Right cardiac atrium (tissue), 5 donors: ENCODE measurements at regions of chr11 and their contacts with region 1.

Region 1: GRCh38 chr11:59207988-59208451 is 4.7 kb downstream of the MPEG1 start:
- DNase-seq: peak in 2 of 3 donors; percentile 37 to 55
- ATAC-seq: peak; percentile 22 to 63
- H3K4me3 ChIP-seq: no peak overlapping the region
- H3K27ac ChIP-seq: no peak overlapping the region
- H3K4me1 ChIP-seq: no peaks in the 10 kb centered on the region
- H3K27me3 ChIP-seq: no peaks in the 10 kb centered on the region

Region 2: GRCh38 chr11:58912124-58912523 is 295.9 kb before region 1 on chr11:
- intact Hi-C with region 1: no loop called
- DNase-seq: no peak
- ATAC-seq: no peak
- H3K4me3 ChIP-seq: no peak overlapping the region
- H3K27ac ChIP-seq: no peak overlapping the region
- H3K4me1 ChIP-seq: no peaks in the 10 kb centered on the region
- H3K27me3 ChIP-seq: no peaks in the 10 kb centered on the region

Region 3: GRCh38 chr11:58999291-58999680 is 208.7 kb before region 1 on chr11:
- intact Hi-C with region 1: no loop called
- DNase-seq: no peak
- ATAC-seq: no peak
- H3K4me3 ChIP-seq: no peak overlapping the region
- H3K27ac ChIP-seq: no peak overlapping the region
- H3K4me1 ChIP-seq: no peaks in the 10 kb centered on the region
- H3K27me3 ChIP-seq: no peaks in the 10 kb centered on the region

Region 4: DNA sequence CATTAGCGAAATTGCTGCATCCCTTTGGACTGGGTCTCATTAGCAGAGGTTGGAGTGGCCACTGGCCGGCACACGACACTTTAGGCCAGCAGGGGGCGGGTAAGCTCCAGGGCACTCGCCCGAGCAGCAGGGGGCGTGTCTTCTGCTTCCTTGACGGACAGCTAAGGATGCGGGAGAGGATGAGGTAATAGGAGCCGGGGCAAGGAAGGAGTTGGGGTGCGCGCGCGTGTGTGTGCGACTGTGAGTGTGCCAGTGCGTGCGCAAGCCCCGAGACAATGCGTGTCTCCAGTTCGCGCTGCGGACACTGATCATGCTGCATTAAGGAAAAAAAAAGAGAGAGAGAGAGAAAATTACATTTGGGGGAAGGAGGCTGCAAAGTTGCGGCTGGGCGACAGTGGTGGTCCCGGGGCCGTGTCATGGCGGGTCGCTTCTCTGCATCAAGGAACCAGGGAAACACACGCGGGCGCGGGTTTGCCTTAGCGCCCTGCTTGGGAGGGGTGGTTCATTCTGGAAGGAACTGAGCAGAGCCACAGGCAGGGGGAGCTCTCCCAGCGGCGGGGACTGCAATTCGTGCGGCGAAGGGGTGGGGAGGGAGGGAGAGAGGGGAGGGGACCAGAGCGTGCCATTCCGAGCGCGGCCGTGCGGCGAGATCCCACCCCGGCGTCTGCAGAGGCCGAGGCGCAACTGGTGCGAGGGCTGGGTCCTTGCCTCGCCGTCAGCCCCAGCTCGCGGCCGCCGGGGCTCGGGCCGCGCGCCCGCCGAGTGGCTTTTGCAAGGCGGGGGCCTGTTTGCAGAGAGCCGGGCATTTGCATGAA is 36.3 kb before region 1 on chr11 and contains the start of gene DTX4:
- intact Hi-C with region 1: loop called (anchors 2 to 5 kb)
- DNase-seq: peak; percentile 92 to 98 (median 97)
- ATAC-seq: peak; percentile 96 to 97
- H3K4me3 ChIP-seq: peak within 1 kb of the TSS; percentile 73
- H3K27ac ChIP-seq: peak within 1 kb of the TSS; percentile 2
- H3K4me1 ChIP-seq: no peaks in the 10 kb centered on the region
- H3K27me3 ChIP-seq: no peaks in the 10 kb centered on the region
- total RNA-seq, gene DTX4: 1.6 to 3.4 (median 1.7) TPM